ENCODE measurements at regions of chr4 and their contacts with region 1.

Region 1: DNA sequence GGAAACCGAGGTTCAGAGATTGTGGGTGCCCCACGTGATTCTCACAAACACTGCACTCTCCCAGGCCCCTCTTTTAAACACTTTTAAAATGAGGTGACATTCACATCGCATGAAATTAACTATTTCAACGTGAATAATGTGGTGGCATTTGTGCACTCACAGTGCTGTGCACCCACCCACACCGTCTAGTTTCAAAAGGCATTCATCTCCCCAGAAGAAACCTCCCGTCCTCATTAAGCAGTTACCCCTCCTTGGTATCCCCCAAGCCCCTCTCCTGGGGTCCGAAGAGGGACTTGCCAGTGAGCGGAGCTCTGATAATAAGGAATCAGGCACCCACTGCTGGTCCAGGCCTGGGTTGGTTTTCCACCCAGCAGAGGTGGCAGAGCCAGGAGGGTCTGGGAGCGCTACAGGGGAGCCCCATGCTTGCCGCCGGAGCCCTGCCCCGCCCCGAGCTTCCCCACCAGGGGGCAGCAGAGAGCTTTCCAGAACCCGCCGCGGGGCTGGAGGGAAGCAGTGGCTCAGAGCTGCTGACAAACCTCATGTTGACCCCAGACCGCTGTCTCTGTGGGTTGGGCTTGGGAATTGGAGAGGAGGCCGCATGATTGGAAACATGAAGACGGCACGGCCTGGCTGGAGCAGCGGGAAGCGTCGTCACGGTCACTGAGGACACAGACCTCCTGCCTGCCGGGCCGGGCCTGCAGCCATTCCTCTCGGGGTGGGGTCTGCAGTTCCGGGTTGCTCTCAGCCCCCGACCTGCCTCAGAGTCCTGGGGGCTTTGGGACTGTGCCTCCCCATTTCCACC is 27.5 kb upstream of the HTRA3 start:
- DNase-seq: peak; percentile 91 to 96
- ATAC-seq: peak; percentile 93
- H3K4me3 ChIP-seq: no peak overlapping the region
- H3K27ac ChIP-seq: no peak overlapping the region
- H3K4me1 ChIP-seq: no peaks in the 10 kb centered on the region
- H3K27me3 ChIP-seq: no peaks in the 10 kb centered on the region

Region 2: GRCh38 chr4:8176547-8177399 is 65.3 kb before region 1 on chr4:
- intact Hi-C with region 1: loop called in 1 of 2 experiments (anchors 5 kb)
- DNase-seq: peak in 1 of 2 donors; percentile 71
- ATAC-seq: peak; percentile 74
- H3K4me3 ChIP-seq: no peak overlapping the region
- H3K27ac ChIP-seq: no peak overlapping the region
- H3K4me1 ChIP-seq: no peaks in the 10 kb centered on the region
- H3K27me3 ChIP-seq: no peaks in the 10 kb centered on the region

Region 3: GRCh38 chr4:8362483-8362882 is 120.4 kb after region 1 on chr4:
- intact Hi-C with region 1: no loop called
- DNase-seq: no peak
- ATAC-seq: no peak
- H3K4me3 ChIP-seq: no peak overlapping the region
- H3K27ac ChIP-seq: no peak overlapping the region
- H3K4me1 ChIP-seq: peaks cover 0 to 3% of the 10 kb centered on the region in 2 donors
- H3K27me3 ChIP-seq: no peaks in the 10 kb centered on the region

Region 4: DNA sequence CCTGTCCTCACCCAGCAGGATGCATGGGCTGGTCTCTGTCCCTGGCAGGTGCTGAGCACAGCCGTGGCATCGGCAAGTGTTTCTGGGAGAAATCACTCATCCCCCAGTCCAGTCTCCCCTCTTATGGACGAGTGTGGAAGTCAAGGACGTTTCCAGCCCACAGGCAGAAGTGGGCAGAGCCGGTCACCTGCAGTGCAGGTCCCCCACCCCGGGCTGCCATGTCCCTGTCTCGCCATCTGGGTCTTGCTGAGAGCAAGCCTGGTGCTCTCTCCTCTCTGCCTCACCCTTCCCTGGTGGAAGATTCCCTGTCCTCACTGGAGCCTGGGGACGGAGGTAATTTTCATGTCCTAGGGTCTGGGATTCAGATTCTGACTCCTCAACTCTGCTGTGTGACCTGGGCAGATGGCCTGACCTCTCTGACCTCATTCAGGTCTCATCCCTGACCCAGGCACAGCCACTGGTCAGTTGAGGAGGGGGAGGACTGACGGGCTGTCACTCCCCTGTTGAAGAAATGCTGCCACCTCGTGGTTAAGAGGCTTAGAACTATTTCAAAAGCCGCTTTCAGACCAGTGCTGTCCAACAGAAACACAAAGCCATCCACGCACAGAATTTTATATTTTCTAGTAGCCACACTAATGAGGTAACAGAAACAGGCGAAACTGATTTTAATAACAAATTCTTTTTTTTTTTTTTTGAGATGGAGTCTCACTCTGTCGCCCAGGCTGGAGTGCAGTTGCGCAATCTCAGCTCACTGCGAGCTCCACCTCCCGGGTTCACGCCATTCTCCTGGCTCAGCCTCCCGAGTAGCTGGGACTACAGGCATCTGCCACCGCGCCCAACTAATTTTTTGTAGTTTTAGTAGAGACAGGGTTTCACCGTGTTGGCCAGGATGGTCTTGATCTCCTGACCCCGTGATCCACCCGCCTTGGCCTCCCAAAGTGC is 352.3 kb after region 1 on chr4:
- intact Hi-C with region 1: loop called in 1 of 2 experiments (anchors 10 kb)
- DNase-seq: no peak
- ATAC-seq: peak; percentile 67
- H3K4me3 ChIP-seq: no peak overlapping the region
- H3K27ac ChIP-seq: no peak overlapping the region
- H3K4me1 ChIP-seq: no peaks in the 10 kb centered on the region
- H3K27me3 ChIP-seq: no peaks in the 10 kb centered on the region